Endothelial cell of umbilical vein (primary cell): ENCODE measurements at regions of chr5 and their contacts with region 1.

Region 1: DNA sequence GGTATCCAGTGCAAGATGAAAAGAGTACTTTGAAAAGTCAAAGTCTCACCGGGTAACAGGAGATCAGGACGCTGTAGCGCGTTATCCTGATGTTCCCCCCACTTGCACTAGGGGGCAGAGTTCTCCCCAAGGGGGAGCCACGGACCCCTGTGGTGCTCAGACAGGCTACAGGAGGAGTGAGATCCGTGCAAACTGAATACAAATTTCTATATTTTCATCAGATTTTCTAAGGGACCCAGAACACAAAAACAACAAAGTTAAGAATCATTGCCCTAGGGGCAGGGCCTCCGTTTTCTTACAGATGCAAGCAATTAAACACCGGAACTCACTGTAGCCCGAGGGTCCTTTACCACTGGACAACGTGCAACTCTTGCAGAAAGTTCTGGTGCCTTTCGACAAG is 2.0 kb downstream of the MYO10 start:
- DNase-seq: peak; percentile 86
- H3K4me3 ChIP-seq: peak overlapping the region; percentile 83 to 99 (median 97)
- H3K27ac ChIP-seq: peak overlapping the region; percentile 81
- H3K4me1 ChIP-seq: peaks cover 48% of the 10 kb centered on the region
- H3K27me3 ChIP-seq: no peaks in the 10 kb centered on the region
- CTCF ChIP-seq: peak; percentile 90 to 99
- POLR2A ChIP-seq: no peak

Region 2: DNA sequence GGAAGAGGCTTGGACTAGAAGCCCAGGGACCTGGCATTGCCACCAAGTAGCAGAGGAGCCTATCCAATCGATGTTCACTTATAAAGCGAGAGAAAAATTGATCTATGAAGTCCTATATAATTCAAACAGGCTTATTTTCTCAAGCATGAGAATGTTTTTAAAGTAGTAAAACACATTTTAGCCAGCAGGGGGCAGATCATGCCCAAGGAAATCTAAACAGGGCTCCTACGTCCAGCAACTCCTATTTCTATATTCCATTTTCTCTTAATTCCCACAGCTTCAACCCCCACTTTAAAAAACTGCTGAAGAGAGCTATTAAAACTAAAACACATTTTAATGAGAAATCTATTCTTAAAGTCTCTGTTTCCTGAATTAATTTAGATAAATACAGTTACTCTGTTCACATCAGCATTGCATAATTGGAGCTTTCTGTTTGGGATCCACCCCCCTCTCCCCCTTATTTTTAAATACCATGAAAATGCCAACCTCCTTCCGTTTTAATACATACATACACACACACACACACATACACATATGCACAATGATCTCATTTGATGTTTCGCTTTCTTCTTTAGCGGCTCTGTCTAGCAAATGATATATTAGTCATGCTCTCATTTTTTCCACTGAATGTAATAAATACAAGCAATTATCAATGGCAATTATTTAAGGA is 143.0 kb before region 1 on chr5:
- CTCF ChIA-PET with region 1: interaction called, 41 read pairs
- POLR2A ChIA-PET with region 1: no interaction called
- dilution Hi-C with region 1: no loop called
- intact Hi-C with region 1: loop called (anchors 1 kb)
- DNase-seq: peak; percentile 79
- H3K4me3 ChIP-seq: no peak overlapping the region
- H3K27ac ChIP-seq: no peak overlapping the region
- H3K4me1 ChIP-seq: no peaks in the 10 kb centered on the region
- H3K27me3 ChIP-seq: no peaks in the 10 kb centered on the region
- CTCF ChIP-seq: peak; percentile 35 to 55
- POLR2A ChIP-seq: no peak

Region 3: GRCh38 chr5:16957304-16958196 is 23.4 kb after region 1 on chr5:
- CTCF ChIA-PET with region 1: interaction called, 4 read pairs
- POLR2A ChIA-PET with region 1: interaction called, 3 read pairs
- dilution Hi-C with region 1: no loop called
- intact Hi-C with region 1: loop called (anchors 1 kb)
- DNase-seq: peak; percentile 89
- H3K4me3 ChIP-seq: no peak overlapping the region
- H3K27ac ChIP-seq: peak overlapping the region; percentile 87
- H3K4me1 ChIP-seq: peaks cover 12% of the 10 kb centered on the region
- H3K27me3 ChIP-seq: no peaks in the 10 kb centered on the region
- CTCF ChIP-seq: no peak
- POLR2A ChIP-seq: no peak

Region 4: DNA sequence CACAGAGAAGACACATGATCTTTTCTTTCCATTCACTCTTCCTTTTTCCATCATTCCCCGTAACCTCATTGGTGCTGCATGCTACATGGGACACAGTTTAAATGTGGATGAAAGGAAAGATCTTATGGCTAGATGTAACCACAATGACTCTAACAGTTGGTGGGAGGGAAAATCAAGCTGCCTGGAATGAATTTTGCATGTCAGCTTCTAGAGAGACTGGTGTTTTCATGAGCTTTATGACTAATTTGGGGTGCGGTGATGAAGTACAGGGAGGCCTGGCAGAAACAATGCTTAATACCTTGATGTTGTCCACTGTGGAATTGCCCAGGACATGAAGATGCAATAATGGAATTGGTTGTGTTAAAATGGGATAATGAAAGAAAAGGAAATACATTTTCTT is 57.9 kb after region 1 on chr5:
- CTCF ChIA-PET with region 1: interaction called, 10 read pairs
- POLR2A ChIA-PET with region 1: interaction called, 5 read pairs
- dilution Hi-C with region 1: no loop called
- intact Hi-C with region 1: loop called (anchors 1 kb)
- DNase-seq: peak; percentile 56
- H3K4me3 ChIP-seq: no peak overlapping the region
- H3K27ac ChIP-seq: peak overlapping the region; percentile 76
- H3K4me1 ChIP-seq: peaks cover 41% of the 10 kb centered on the region
- H3K27me3 ChIP-seq: no peaks in the 10 kb centered on the region
- CTCF ChIP-seq: no peak
- POLR2A ChIP-seq: no peak

Region 5: DNA sequence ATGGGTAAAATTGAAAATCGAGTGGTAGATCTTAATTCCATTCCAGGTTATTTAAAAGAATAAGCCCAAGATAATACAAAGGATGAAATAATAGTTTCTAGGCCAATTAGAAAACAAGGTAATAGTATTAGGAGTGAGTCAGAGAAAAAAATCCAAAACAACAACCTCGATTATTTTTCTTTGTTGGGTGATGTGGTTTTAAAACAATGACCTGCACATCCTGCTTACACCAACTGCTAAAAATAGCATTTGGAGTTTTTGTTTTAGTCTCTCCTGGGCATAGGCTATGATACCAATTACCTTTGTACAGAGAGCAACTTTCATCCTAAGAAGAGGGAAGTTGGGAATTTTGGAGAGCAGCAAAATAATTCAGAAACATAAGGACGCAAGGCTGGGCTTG is 103.6 kb after region 1 on chr5:
- CTCF ChIA-PET with region 1: interaction called, 3 read pairs
- POLR2A ChIA-PET with region 1: no interaction called
- dilution Hi-C with region 1: no loop called
- intact Hi-C with region 1: loop called (anchors 1 kb)
- DNase-seq: peak; percentile 85
- H3K4me3 ChIP-seq: no peak overlapping the region
- H3K27ac ChIP-seq: peak overlapping the region; percentile 81
- H3K4me1 ChIP-seq: peaks cover 19% of the 10 kb centered on the region
- H3K27me3 ChIP-seq: no peaks in the 10 kb centered on the region
- CTCF ChIP-seq: no peak
- POLR2A ChIP-seq: no peak

Region 6: GRCh38 chr5:17118631-17119030 is 184.5 kb after region 1 on chr5:
- CTCF ChIA-PET with region 1: no interaction called
- POLR2A ChIA-PET with region 1: interaction called, 3 read pairs
- dilution Hi-C with region 1: no loop called
- intact Hi-C with region 1: loop called (anchors 1 kb)
- DNase-seq: peak; percentile 99
- H3K4me3 ChIP-seq: no peak overlapping the region
- H3K27ac ChIP-seq: peak overlapping the region; percentile 85
- H3K4me1 ChIP-seq: peaks cover 32% of the 10 kb centered on the region
- H3K27me3 ChIP-seq: no peaks in the 10 kb centered on the region
- CTCF ChIP-seq: no peak
- POLR2A ChIP-seq: peak; percentile 64